K562 (cell line): ENCODE measurements at regions of chr12 and their contacts with region 1.

Region 1: DNA sequence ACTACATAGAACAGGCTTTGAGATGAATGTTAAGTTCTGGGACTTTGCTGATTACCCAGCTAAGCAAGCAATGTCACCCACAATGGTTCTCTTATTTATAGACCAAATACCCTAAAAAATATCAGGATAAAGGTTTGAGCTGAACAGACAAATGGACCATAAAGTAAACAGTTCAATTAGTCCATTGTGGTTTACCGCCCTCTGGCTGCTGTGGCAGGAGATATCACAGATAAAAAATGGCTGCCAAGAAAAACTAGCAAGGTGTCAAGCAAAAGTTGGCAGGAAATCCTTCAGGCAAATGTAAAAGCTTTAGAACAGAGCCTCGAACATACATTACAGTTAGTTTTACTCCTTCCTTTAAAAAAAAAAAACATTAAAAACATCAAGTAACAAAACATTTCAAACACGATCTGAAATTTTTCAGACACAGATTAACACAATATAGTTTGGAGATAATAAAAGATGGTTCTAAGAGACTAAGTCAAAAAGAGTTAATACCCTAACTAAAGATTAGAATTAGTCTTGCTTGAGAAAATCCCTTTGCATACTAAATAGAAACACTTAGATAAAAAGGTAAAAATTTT is 41.3 kb downstream of the MED13L start:
- DNase-seq: peak; percentile 22 to 76 (median 44)
- ATAC-seq: peak; percentile 87
- H3K4me3 ChIP-seq: no peak overlapping the region
- H3K27ac ChIP-seq: peak overlapping the region; percentile 45; the same call in 1 of the 3 replicates
- H3K4me1 ChIP-seq: peaks cover 0 to 20% of the 10 kb centered on the region in 2 experiments; a peak in 3 of 5 replicates
- H3K27me3 ChIP-seq: no peaks in the 10 kb centered on the region
- CTCF ChIP-seq: peak; percentile 63 to 81 (median 64)
- EP300 ChIP-seq: no peak; the same call in 1 of the 2 replicates
- POLR2A ChIP-seq: no peak
- RAD21 ChIP-seq: peak; percentile 78 to 87

Region 2: DNA sequence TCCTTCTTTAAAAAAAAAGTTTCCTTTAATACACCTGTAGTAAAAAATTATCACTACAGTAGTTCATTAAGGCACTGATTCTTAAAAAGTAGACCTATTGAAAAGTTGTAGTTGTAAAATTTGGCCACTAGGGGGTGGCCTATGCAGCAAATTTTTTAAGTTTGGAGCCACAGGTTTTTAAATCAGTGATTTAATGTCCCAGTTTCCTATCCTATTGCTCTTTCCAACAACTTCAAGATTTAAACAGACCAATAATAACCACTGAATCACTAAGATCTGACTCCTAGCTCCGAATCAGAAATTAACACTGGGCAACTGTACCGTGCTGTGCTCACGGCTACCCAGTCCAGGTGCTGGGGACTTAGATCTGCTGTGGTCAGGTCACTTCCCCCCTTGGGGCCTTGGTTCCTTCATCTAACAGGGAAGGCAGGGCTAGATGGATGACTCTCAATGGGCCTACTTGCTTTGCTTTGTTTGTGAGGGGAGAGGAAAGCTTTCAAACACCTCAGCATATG is 238.1 kb before region 1 on chr12:
- CTCF ChIA-PET with region 1: interaction called, 8 read pairs
- POLR2A ChIA-PET with region 1: no interaction called
- in situ Hi-C with region 1: no loop called
- intact Hi-C with region 1: loop called (anchors 5 kb)
- DNase-seq: peak; percentile 31 to 53 (median 31)
- ATAC-seq: peak; percentile 50
- H3K4me3 ChIP-seq: no peak overlapping the region
- H3K27ac ChIP-seq: no peak overlapping the region
- H3K4me1 ChIP-seq: no peaks in the 10 kb centered on the region
- H3K27me3 ChIP-seq: no peaks in the 10 kb centered on the region
- CTCF ChIP-seq: peak; percentile 36 to 77 (median 60); a peak in 4 of 6 replicates
- EP300 ChIP-seq: no peak
- POLR2A ChIP-seq: no peak
- RAD21 ChIP-seq: peak; percentile 60 to 65

Region 3: GRCh38 chr12:116015525-116015924 is 220.7 kb before region 1 on chr12:
- CTCF ChIA-PET with region 1: interaction called, 10 read pairs
- POLR2A ChIA-PET with region 1: no interaction called
- in situ Hi-C with region 1: no loop called
- intact Hi-C with region 1: loop called (anchors 5 kb)
- DNase-seq: peak in 2 of 4 experiments; percentile 13 to 18
- ATAC-seq: peak; percentile 71; the same call in 2 of the 3 replicates
- H3K4me3 ChIP-seq: no peak overlapping the region
- H3K27ac ChIP-seq: no peak overlapping the region
- H3K4me1 ChIP-seq: no peaks in the 10 kb centered on the region
- H3K27me3 ChIP-seq: no peaks in the 10 kb centered on the region
- CTCF ChIP-seq: peak in 2 of 3 experiments; percentile 28 to 59; a peak in 2 of 6 replicates
- EP300 ChIP-seq: no peak
- POLR2A ChIP-seq: no peak
- RAD21 ChIP-seq: peak; percentile 36 to 70

Region 4: GRCh38 chr12:116066381-116067230 is 169.6 kb before region 1 on chr12:
- CTCF ChIA-PET with region 1: interaction called, 7 read pairs
- POLR2A ChIA-PET with region 1: no interaction called
- in situ Hi-C with region 1: no loop called
- intact Hi-C with region 1: loop called (anchors 2 kb)
- DNase-seq: peak; percentile 47 to 69 (median 49)
- ATAC-seq: peak; percentile 80
- H3K4me3 ChIP-seq: no peak overlapping the region
- H3K27ac ChIP-seq: no peak overlapping the region
- H3K4me1 ChIP-seq: peaks cover 0 to 13% of the 10 kb centered on the region in 2 experiments; a peak in 2 of 5 replicates
- H3K27me3 ChIP-seq: no peaks in the 10 kb centered on the region
- CTCF ChIP-seq: peak; percentile 72 to 85 (median 83)
- EP300 ChIP-seq: no peak
- POLR2A ChIP-seq: no peak
- RAD21 ChIP-seq: peak; percentile 53 to 65

Region 5: GRCh38 chr12:116142936-116143898 is 93.0 kb before region 1 on chr12:
- CTCF ChIA-PET with region 1: interaction called, 11 read pairs
- POLR2A ChIA-PET with region 1: no interaction called
- in situ Hi-C with region 1: no loop called
- intact Hi-C with region 1: loop called (anchors 1 kb)
- DNase-seq: no peak
- ATAC-seq: peak; percentile 34
- H3K4me3 ChIP-seq: no peak overlapping the region
- H3K27ac ChIP-seq: peak overlapping the region; percentile 30; the same call in 2 of the 3 replicates
- H3K4me1 ChIP-seq: peaks cover 8 to 25% of the 10 kb centered on the region in 2 experiments; a peak in 4 of 5 replicates
- H3K27me3 ChIP-seq: no peaks in the 10 kb centered on the region
- CTCF ChIP-seq: no peak
- EP300 ChIP-seq: no peak
- POLR2A ChIP-seq: no peak
- RAD21 ChIP-seq: no peak